CD8-positive, alpha-beta memory T cell (primary cell): ENCODE measurements at regions of chr21 and their contacts with region 1.

Region 1: DNA sequence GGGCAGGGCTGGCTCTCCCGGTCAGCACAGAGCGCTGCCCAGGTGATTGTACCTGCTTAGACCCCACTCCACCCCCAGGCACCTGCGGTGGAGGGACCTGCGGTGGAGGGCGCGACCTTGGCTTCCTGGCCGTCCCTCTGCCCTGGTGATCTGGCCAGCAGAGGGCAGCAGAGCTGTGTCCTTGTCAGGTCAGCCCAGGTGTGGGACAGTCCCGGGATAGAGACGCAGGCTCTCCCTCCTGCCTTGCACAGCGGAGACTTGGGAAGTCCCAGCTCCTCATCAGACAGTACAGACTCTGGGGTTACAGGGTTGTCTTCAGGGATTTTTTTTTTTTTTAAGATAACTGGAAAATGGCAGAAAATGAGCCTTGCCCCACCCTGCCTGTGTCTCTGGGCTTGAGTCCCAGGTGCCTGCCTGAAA is 10.0 kb downstream of the SLX9 start:
- DNase-seq: peak; percentile 65 to 87 (median 79)
- H3K4me3 ChIP-seq: no peak overlapping the region
- H3K4me3 Mint-ChIP-seq: peak overlapping the region in 1 of 7 donors; percentile 61
- H3K27ac ChIP-seq: no peak overlapping the region
- H3K27ac Mint-ChIP-seq: peak overlapping the region in 1 of 8 donors; percentile 65
- H3K4me1 ChIP-seq: peaks cover 6% of the 10 kb centered on the region
- H3K4me1 Mint-ChIP-seq: peaks cover 10 to 22% (median 10%) of the 10 kb centered on the region in 3 donors
- H3K27me3 ChIP-seq: no peaks in the 10 kb centered on the region
- H3K27me3 Mint-ChIP-seq: no peaks in the 10 kb centered on the region

Region 2: DNA sequence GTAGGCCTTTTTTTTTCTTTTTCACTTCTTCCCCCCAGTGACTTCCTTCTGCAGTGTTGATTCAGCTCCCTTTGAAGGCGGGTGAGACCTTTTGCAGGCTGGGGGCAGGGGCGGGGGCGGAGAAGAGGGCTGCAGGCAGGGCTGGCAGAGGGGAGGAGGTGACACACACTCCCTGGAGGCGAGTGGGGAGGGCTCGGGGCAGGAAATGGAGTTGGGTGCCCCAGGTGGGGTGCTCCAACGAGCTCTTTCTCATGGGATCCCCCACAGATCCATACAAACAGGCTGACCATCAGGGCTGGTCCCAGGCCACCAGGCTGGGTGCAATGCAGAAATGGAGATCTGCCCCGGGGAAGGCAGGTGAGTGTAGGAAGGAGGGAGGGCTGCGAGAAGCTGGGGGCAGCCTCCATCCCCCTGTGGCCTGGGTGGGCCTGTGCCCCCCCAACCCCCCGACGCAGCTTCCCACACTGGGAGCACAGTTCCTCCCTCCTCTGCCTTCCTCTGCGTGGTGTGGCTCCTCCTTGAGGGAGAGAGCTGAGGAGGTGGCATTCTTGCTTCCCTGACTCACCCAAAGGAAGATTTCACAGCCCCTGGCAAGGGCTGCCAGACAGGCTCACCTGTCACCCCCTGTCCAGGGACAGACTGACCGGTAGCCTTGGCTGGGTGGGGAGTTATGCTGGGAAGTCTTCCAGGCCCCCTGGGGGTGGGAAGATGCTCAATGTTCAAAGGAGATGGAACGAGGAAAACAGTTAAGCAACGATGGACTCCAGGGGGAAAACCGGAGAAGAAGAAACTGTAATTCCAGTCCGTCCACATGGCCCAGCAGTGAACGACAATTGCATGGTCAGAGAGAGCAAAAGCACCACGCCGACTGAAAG is 22.0 kb before region 1 on chr21:
- CTCF ChIA-PET with region 1: no interaction called
- POLR2A ChIA-PET with region 1: no interaction called
- DNase-seq: peak; percentile 70 to 94 (median 83)
- H3K4me3 ChIP-seq: peak overlapping the region; percentile 96
- H3K4me3 Mint-ChIP-seq: peak overlapping the region; percentile 79 to 100 (median 93)
- H3K27ac ChIP-seq: peak overlapping the region; percentile 70
- H3K27ac Mint-ChIP-seq: peak overlapping the region; percentile 88 to 98 (median 95)
- H3K4me1 ChIP-seq: peaks cover 66% of the 10 kb centered on the region
- H3K4me1 Mint-ChIP-seq: peaks cover 71 to 85% (median 75%) of the 10 kb centered on the region in 3 donors
- H3K27me3 ChIP-seq: no peaks in the 10 kb centered on the region
- H3K27me3 Mint-ChIP-seq: no peaks in the 10 kb centered on the region

Region 3: GRCh38 chr21:44962403-44962966 is 12.7 kb after region 1 on chr21:
- CTCF ChIA-PET with region 1: interaction called, 22 read pairs
- POLR2A ChIA-PET with region 1: no interaction called
- DNase-seq: no peak
- H3K4me3 ChIP-seq: no peak overlapping the region
- H3K4me3 Mint-ChIP-seq: no peak overlapping the region
- H3K27ac ChIP-seq: no peak overlapping the region
- H3K27ac Mint-ChIP-seq: no peak overlapping the region
- H3K4me1 ChIP-seq: peaks cover 28% of the 10 kb centered on the region
- H3K4me1 Mint-ChIP-seq: peaks cover 22 to 45% (median 31%) of the 10 kb centered on the region in 3 donors
- H3K27me3 ChIP-seq: no peaks in the 10 kb centered on the region
- H3K27me3 Mint-ChIP-seq: no peaks in the 10 kb centered on the region

Region 4: DNA sequence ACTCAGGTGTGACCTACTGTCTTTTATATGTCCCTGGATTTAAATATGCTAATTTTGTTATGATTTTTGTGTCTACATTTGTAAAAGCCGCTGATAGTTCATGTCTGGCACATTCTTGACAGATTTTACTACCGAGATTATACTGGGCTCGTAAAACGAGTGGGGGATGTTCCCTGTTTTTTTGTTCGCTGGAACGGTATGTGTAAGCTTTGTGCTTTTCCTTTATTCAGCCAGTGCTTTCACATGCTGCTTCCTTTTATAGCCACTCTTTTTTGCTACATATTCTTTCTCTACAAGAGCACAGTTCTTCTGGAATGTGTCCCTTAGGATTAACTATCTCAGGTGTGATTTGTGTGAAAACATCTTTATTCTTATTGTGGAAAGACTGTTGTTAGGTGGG is 171.2 kb after region 1 on chr21:
- CTCF ChIA-PET with region 1: interaction called, 194 read pairs
- POLR2A ChIA-PET with region 1: no interaction called
- DNase-seq: no peak
- H3K4me3 ChIP-seq: no peak overlapping the region
- H3K4me3 Mint-ChIP-seq: no peak overlapping the region
- H3K27ac ChIP-seq: no peak overlapping the region
- H3K27ac Mint-ChIP-seq: no peak overlapping the region
- H3K4me1 ChIP-seq: no peaks in the 10 kb centered on the region
- H3K4me1 Mint-ChIP-seq: peaks cover 11 to 42% (median 18%) of the 10 kb centered on the region in 3 donors
- H3K27me3 ChIP-seq: no peaks in the 10 kb centered on the region
- H3K27me3 Mint-ChIP-seq: no peaks in the 10 kb centered on the region

Region 5: DNA sequence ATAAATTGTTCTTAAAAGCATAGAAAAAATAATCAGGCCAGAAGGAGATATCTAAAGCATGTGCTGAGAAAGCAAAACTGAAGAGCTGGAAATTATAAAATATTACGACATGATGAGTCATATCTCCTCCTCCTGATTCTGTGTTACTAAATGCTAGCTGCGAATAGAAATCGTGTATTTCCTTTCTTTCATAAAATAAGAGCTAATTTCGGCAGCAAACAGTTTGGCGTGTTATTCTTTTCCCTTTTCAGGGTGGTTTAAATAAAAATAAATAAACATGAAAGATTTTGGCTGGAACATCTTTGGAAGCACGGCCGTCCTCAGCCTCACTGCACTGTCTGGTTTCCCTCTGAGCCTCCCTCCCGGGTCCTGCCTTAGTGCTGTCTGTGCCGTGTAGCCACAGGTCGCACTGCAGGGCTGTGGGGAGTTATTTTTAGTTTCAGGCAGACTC is 180.6 kb after region 1 on chr21:
- CTCF ChIA-PET with region 1: interaction called, 194 read pairs
- POLR2A ChIA-PET with region 1: interaction called, 4 read pairs
- DNase-seq: no peak
- H3K4me3 ChIP-seq: no peak overlapping the region
- H3K4me3 Mint-ChIP-seq: no peak overlapping the region
- H3K27ac ChIP-seq: no peak overlapping the region
- H3K27ac Mint-ChIP-seq: peak overlapping the region in 1 of 8 donors; percentile 54
- H3K4me1 ChIP-seq: peaks cover 13% of the 10 kb centered on the region
- H3K4me1 Mint-ChIP-seq: peaks cover 8 to 26% (median 12%) of the 10 kb centered on the region in 3 donors
- H3K27me3 ChIP-seq: no peaks in the 10 kb centered on the region
- H3K27me3 Mint-ChIP-seq: no peaks in the 10 kb centered on the region

Region 6: GRCh38 chr21:45179568-45180245 is 229.9 kb after region 1 on chr21:
- CTCF ChIA-PET with region 1: no interaction called
- POLR2A ChIA-PET with region 1: no interaction called
- DNase-seq: no peak
- H3K4me3 ChIP-seq: no peak overlapping the region
- H3K4me3 Mint-ChIP-seq: no peak overlapping the region
- H3K27ac ChIP-seq: no peak overlapping the region
- H3K27ac Mint-ChIP-seq: peak overlapping the region in 1 of 8 donors; percentile 12
- H3K4me1 ChIP-seq: no peaks in the 10 kb centered on the region
- H3K4me1 Mint-ChIP-seq: no peaks in the 10 kb centered on the region
- H3K27me3 ChIP-seq: no peaks in the 10 kb centered on the region
- H3K27me3 Mint-ChIP-seq: no peaks in the 10 kb centered on the region